ENCODE measurements at regions of chr11 and their contacts with region 1.

Region 1: GRCh38 chr11:126480410-126481302 is 125.2 kb downstream of the ST3GAL4 start:
- DNase-seq: peak; percentile 51
- ATAC-seq: peak; percentile 78
- H3K4me3 ChIP-seq: peak overlapping the region; percentile 56; the same call in 1 of the 2 replicates
- H3K27ac ChIP-seq: no peak overlapping the region
- H3K4me1 ChIP-seq: peaks cover 25% of the 10 kb centered on the region
- H3K27me3 ChIP-seq: no peaks in the 10 kb centered on the region; a peak in 1 of 4 replicates
- CTCF ChIP-seq: peak; percentile 92 to 95 (median 95)
- EP300 ChIP-seq: no peak
- POLR2A ChIP-seq: no peak
- RAD21 ChIP-seq: peak; percentile 65

Region 2: GRCh38 chr11:126303623-126304456 is 176.8 kb before region 1 on chr11 and contains the start of gene DCPS:
- CTCF ChIA-PET with region 1: interaction called, 232 read pairs
- POLR2A ChIA-PET with region 1: interaction called, 3 read pairs
- RAD21 ChIA-PET with region 1: interaction called, 7 read pairs
- SMC1A ChIA-PET with region 1: interaction called, 78 read pairs
- in situ Hi-C with region 1: no loop called
- intact Hi-C with region 1: no loop called
- DNase-seq: peak; percentile 81
- ATAC-seq: peak; percentile 94
- H3K4me3 ChIP-seq: peak within 1 kb of the TSS; percentile 96
- H3K27ac ChIP-seq: peak within 1 kb of the TSS; percentile 92
- H3K4me1 ChIP-seq: peaks cover 11% of the 10 kb centered on the region
- H3K27me3 ChIP-seq: no peaks in the 10 kb centered on the region
- CTCF ChIP-seq: no peak
- EP300 ChIP-seq: no peak
- POLR2A ChIP-seq: peak; percentile 99
- RAD21 ChIP-seq: no peak
- polyA plus RNA-seq, gene DCPS: 23.5 to 33.2 TPM

Region 3: GRCh38 chr11:126318574-126319373 is 161.9 kb before region 1 on chr11:
- CTCF ChIA-PET with region 1: interaction called, 31 read pairs
- POLR2A ChIA-PET with region 1: no interaction called
- RAD21 ChIA-PET with region 1: interaction called, 3 read pairs
- SMC1A ChIA-PET with region 1: interaction called, 8 read pairs
- in situ Hi-C with region 1: no loop called
- intact Hi-C with region 1: no loop called
- DNase-seq: peak; percentile 55
- ATAC-seq: peak; percentile 94
- H3K4me3 ChIP-seq: 0 out of 2 replicates have a peak overlapping the region, but pooled peaks have one; percentile 6
- H3K27ac ChIP-seq: peak overlapping the region; percentile 71
- H3K4me1 ChIP-seq: peaks cover 26% of the 10 kb centered on the region
- H3K27me3 ChIP-seq: no peaks in the 10 kb centered on the region
- CTCF ChIP-seq: no peak
- EP300 ChIP-seq: no peak
- POLR2A ChIP-seq: no peak
- RAD21 ChIP-seq: no peak

Region 4: DNA sequence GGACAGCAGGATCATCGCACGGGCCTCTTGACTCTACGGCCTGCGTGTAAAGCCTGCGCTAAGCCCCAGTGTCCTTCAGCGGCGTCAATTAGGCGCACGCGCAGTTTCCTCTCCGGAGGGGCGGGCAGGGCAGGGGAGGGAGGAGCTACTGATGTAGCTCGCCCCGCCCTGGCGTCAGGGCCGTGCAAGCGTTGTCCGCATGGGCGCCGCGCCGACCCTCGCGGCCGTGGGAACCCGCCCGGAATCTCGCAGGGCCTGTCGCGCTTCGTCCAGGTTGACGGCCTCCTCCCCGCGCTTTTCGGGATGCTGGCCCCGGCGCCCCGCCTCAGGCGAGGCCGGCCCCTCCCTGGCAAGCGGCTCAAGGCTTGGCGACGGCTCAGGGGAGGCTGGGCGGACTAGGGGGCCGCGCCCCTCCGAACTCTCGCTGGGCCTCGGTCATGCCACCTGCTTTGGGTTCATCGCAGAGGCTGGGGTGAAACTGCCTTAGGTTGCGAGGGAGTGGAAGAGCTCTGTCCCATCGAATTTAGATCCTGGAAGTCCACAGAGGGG is 64.0 kb before region 1 on chr11:
- CTCF ChIA-PET with region 1: interaction called, 9 read pairs
- POLR2A ChIA-PET with region 1: interaction called, 8 read pairs
- RAD21 ChIA-PET with region 1: interaction called, 8 read pairs
- SMC1A ChIA-PET with region 1: interaction called, 10 read pairs
- in situ Hi-C with region 1: no loop called
- intact Hi-C with region 1: no loop called
- DNase-seq: peak; percentile 27
- ATAC-seq: peak; percentile 88
- H3K4me3 ChIP-seq: 0 out of 2 replicates have a peak overlapping the region, but pooled peaks have one; percentile 17
- H3K27ac ChIP-seq: no peak overlapping the region
- H3K4me1 ChIP-seq: peaks cover 13% of the 10 kb centered on the region
- H3K27me3 ChIP-seq: peaks cover 0 to 2% of the 10 kb centered on the region in 2 experiments; a peak in 2 of 4 replicates
- CTCF ChIP-seq: no peak
- EP300 ChIP-seq: no peak
- POLR2A ChIP-seq: no peak
- RAD21 ChIP-seq: no peak

Region 5: DNA sequence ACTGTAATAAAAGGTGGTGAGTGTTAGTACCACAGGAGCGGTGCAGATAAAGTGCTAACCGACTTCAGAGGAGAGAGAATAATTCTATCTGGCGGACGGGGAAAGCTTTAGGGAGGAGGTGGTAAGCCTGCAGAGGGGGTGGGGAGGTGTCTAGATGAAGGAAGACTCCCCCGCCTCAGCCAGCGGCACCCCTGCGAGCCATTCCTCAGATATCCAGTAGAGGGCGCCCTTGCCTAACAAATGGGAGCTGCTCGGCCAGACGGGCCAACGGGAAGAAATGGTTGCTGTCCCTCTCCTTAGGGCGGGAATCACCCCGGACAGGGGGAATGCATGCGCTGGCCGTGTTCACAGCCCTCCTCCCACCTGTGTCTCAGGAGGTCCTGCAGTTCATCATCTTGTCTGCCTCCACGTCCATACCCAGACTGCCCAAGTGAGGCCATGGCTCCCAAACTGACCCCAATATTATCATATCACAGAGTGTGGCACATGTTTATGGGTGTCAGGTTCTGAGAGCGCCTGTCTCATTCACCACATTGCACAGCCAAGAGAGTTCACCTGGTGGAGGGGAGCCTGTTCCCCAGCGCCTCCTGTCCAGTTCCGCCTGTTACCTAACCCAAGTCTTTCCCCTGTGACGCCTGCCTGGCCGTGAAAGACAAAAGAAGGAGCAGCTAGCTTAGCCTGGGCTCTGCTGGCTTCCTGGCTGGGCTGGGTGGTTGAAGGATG is 39.7 kb before region 1 on chr11:
- CTCF ChIA-PET with region 1: interaction called, 125 read pairs
- POLR2A ChIA-PET with region 1: interaction called, 3 read pairs
- RAD21 ChIA-PET with region 1: interaction called, 33 read pairs
- SMC1A ChIA-PET with region 1: interaction called, 79 read pairs
- in situ Hi-C with region 1: no loop called
- intact Hi-C with region 1: loop called (anchors 1 kb)
- DNase-seq: no peak
- ATAC-seq: peak; percentile 92
- H3K4me3 ChIP-seq: no peak overlapping the region
- H3K27ac ChIP-seq: no peak overlapping the region
- H3K4me1 ChIP-seq: no peaks in the 10 kb centered on the region
- H3K27me3 ChIP-seq: no peaks in the 10 kb centered on the region; a peak in 1 of 4 replicates
- CTCF ChIP-seq: peak; percentile 90 to 93 (median 92); a peak in 5 of 6 replicates
- EP300 ChIP-seq: no peak
- POLR2A ChIP-seq: no peak
- RAD21 ChIP-seq: peak; percentile 94

Region 6: DNA sequence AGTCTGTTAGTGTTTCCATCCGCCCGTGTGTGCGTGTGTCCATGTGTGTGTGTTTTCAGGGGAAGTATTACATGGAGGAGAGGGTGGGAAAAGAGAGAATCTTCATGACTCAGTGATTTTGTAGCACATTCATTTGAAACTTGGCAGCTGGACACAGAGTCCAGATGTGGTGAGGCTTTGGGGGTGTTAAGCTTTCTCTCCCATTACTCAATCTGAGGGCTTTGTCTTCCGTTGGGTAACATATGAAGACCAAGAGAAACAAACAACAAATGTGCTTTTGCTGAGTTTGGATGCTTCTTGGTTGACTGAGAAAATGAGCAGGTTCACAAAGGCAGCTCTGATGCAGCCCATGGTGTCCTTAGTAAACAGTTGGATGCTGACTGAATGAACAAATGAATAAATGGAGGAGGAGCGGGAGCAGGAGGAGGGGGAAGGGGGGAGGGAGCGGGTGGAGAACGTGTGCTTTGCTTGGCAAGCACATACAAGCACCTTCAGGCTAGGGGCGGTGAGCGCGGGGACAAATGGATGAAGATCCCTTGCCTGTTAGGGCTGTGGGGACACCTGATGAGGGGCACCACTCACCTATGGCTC is 20.9 kb before region 1 on chr11:
- CTCF ChIA-PET with region 1: interaction called, 76 read pairs
- POLR2A ChIA-PET with region 1: no interaction called
- RAD21 ChIA-PET with region 1: no interaction called
- SMC1A ChIA-PET with region 1: interaction called, 6 read pairs
- in situ Hi-C with region 1: no loop called
- intact Hi-C with region 1: no loop called
- DNase-seq: no peak
- ATAC-seq: no peak
- H3K4me3 ChIP-seq: no peak overlapping the region
- H3K27ac ChIP-seq: no peak overlapping the region
- H3K4me1 ChIP-seq: peaks cover 1% of the 10 kb centered on the region
- H3K27me3 ChIP-seq: no peaks in the 10 kb centered on the region; a peak in 3 of 4 replicates
- CTCF ChIP-seq: no peak
- EP300 ChIP-seq: no peak
- POLR2A ChIP-seq: no peak
- RAD21 ChIP-seq: no peak

Region 7: DNA sequence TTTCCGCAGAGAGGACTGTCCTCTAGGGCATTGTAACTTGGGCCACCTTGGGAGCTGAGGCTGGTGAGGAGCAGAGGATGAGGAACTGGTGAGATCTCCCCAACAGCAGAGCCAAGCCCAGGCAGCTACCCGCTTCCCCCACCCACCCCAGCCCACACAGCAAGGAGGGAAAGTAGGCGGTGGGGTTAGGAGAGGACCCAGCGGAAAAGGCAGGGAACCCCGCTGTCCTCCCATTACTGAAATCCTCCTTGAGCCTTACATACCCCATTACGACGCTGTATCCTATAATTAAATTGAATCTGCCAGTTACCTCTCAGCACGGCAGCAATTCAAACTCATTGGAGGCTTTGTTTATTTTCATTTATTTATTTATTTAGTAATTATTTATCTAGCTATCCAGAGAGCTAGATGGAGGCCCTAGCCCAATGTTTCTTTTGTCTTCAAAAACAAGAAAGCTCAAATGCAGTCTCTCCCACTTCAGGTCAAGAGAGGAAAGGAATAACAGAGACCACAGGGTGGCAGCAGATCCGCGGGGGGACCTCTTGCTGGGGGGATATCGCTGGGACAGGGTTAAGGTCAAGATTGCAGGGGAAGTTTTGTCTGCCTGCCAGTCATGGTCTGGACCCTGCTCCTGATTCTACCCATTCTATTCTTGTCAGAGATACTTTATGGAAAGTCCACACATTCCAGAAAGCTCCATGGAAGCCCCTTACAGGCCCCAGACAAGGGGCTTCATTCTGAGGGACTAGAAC is 92.8 kb after region 1 on chr11:
- CTCF ChIA-PET with region 1: no interaction called
- POLR2A ChIA-PET with region 1: no interaction called
- RAD21 ChIA-PET with region 1: no interaction called
- SMC1A ChIA-PET with region 1: no interaction called
- in situ Hi-C with region 1: no loop called
- intact Hi-C with region 1: no loop called
- DNase-seq: no peak
- ATAC-seq: no peak
- H3K4me3 ChIP-seq: no peak overlapping the region
- H3K27ac ChIP-seq: no peak overlapping the region
- H3K4me1 ChIP-seq: no peaks in the 10 kb centered on the region
- H3K27me3 ChIP-seq: peaks cover 0 to 9% of the 10 kb centered on the region in 2 experiments; a peak in 2 of 4 replicates
- CTCF ChIP-seq: peak in 2 of 3 experiments; percentile 9 to 22; a peak in 1 of 6 replicates
- EP300 ChIP-seq: no peak
- POLR2A ChIP-seq: no peak
- RAD21 ChIP-seq: no peak